CD4-positive, alpha-beta memory T cell (primary cell): ENCODE measurements at regions of chr1 and their contacts with region 1.

Region 1: GRCh38 chr1:151594143-151594625 is 17.7 kb upstream of the SNX27 start:
- DNase-seq: peak; percentile 82 to 84 (median 83)
- H3K4me3 ChIP-seq: peak overlapping the region in 1 of 2 donors; percentile 33
- H3K4me3 Mint-ChIP-seq: peak overlapping the region in 7 of 8 donors; percentile 33 to 82 (median 70)
- H3K27ac ChIP-seq: no peak overlapping the region
- H3K27ac Mint-ChIP-seq: peak overlapping the region in 6 of 7 donors; percentile 4 to 49 (median 26)
- H3K4me1 ChIP-seq: peaks cover 5% of the 10 kb centered on the region
- H3K4me1 Mint-ChIP-seq: peaks cover 3 to 12% (median 9%) of the 10 kb centered on the region in 4 donors
- H3K27me3 ChIP-seq: no peaks in the 10 kb centered on the region
- H3K27me3 Mint-ChIP-seq: peaks cover 4 to 8% of the 10 kb centered on the region in 2 donors

Region 2: GRCh38 chr1:151443846-151444782 is 150.1 kb before region 1 on chr1:
- CTCF ChIA-PET with region 1: interaction called, 12 read pairs
- POLR2A ChIA-PET with region 1: no interaction called
- intact Hi-C with region 1: loop called (anchors 1 kb)
- DNase-seq: peak; percentile 68 to 82 (median 68)
- H3K4me3 ChIP-seq: no peak overlapping the region
- H3K4me3 Mint-ChIP-seq: no peak overlapping the region
- H3K27ac ChIP-seq: no peak overlapping the region
- H3K27ac Mint-ChIP-seq: peak overlapping the region in 3 of 7 donors; percentile 41 to 79 (median 69)
- H3K4me1 ChIP-seq: peaks cover 50% of the 10 kb centered on the region
- H3K4me1 Mint-ChIP-seq: peaks cover 32 to 65% (median 50%) of the 10 kb centered on the region in 4 donors
- H3K27me3 ChIP-seq: no peaks in the 10 kb centered on the region
- H3K27me3 Mint-ChIP-seq: no peaks in the 10 kb centered on the region

Region 3: DNA sequence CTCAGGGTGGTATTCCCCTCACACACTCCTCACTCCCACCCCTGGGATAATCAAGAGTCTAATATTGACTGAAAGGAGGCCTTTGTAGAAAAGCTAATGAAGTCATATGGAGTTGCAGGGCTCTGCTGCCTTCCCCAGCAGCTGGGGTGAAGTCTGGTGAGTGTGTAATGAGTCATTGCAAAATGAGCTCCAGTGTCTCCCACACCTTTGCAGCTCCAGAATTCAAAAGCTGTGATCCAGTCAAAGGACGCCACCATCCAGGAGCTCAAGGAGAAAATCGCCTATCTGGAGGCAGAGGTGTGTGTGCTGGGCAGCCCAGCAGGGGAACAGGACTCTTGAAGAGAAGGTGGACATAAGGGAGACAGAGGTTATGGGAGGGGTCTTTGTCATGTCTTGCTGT is 14.7 kb before region 1 on chr1:
- CTCF ChIA-PET with region 1: interaction called, 11 read pairs
- POLR2A ChIA-PET with region 1: no interaction called
- intact Hi-C with region 1: no loop called
- DNase-seq: no peak
- H3K4me3 ChIP-seq: no peak overlapping the region
- H3K4me3 Mint-ChIP-seq: no peak overlapping the region
- H3K27ac ChIP-seq: no peak overlapping the region
- H3K27ac Mint-ChIP-seq: peak overlapping the region in 2 of 7 donors; percentile 39 to 42
- H3K4me1 ChIP-seq: no peaks in the 10 kb centered on the region
- H3K4me1 Mint-ChIP-seq: no peaks in the 10 kb centered on the region
- H3K27me3 ChIP-seq: no peaks in the 10 kb centered on the region
- H3K27me3 Mint-ChIP-seq: no peaks in the 10 kb centered on the region

Region 4: DNA sequence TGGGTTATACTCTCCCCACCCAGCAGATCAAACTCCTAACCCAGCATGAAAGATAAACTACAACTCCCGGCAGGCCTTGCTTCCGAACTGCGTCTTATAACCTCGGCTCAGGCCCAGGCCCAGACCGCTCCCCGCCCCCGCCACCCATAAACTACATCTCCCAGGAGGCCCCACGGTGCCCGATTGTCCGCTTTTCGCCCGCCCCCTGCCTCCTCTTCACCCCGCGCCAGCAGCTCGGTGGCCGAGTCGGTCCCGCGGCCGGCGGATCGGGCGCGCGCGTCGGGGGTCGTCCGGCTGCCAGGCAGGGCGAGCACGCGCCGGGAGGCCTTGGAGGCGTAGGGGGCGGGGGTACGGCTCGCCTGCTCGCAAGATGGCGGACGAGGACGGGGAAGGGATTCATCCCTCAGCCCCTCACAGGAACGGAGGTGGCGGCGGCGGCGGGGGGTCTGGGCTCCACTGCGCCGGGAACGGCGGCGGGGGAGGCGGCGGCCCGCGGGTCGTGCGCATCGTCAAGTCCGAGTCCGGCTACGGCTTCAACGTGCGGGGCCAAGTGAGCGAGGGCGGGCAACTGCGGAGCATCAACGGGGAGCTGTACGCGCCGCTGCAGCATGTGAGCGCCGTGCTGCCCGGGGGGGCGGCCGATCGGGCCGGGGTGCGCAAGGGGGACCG is 17.8 kb after region 1 on chr1 and contains the start of gene SNX27:
- CTCF ChIA-PET with region 1: interaction called, 33 read pairs
- POLR2A ChIA-PET with region 1: interaction called, 3 read pairs
- intact Hi-C with region 1: loop called (anchors 1 kb)
- DNase-seq: peak; percentile 87 to 96 (median 89)
- H3K4me3 ChIP-seq: peak within 1 kb of the TSS; percentile 73 to 77
- H3K4me3 Mint-ChIP-seq: peak within 1 kb of the TSS; percentile 98 to 100 (median 99)
- H3K27ac ChIP-seq: peak within 1 kb of the TSS; percentile 87
- H3K27ac Mint-ChIP-seq: peak within 1 kb of the TSS; percentile 89 to 99 (median 97)
- H3K4me1 ChIP-seq: peaks cover 32% of the 10 kb centered on the region
- H3K4me1 Mint-ChIP-seq: peaks cover 31 to 46% (median 39%) of the 10 kb centered on the region in 4 donors
- H3K27me3 ChIP-seq: no peaks in the 10 kb centered on the region
- H3K27me3 Mint-ChIP-seq: peaks cover 0 to 1% of the 10 kb centered on the region in 2 donors
- total RNA-seq, gene SNX27: 40.0 to 44.3 TPM

Region 5: GRCh38 chr1:151739590-151740375 is 145.6 kb after region 1 on chr1:
- CTCF ChIA-PET with region 1: interaction called, 21 read pairs
- POLR2A ChIA-PET with region 1: no interaction called
- intact Hi-C with region 1: loop called (anchors 1 kb)
- DNase-seq: no peak
- H3K4me3 ChIP-seq: no peak overlapping the region
- H3K4me3 Mint-ChIP-seq: no peak overlapping the region
- H3K27ac ChIP-seq: no peak overlapping the region
- H3K27ac Mint-ChIP-seq: no peak overlapping the region
- H3K4me1 ChIP-seq: no peaks in the 10 kb centered on the region
- H3K4me1 Mint-ChIP-seq: no peaks in the 10 kb centered on the region
- H3K27me3 ChIP-seq: no peaks in the 10 kb centered on the region
- H3K27me3 Mint-ChIP-seq: no peaks in the 10 kb centered on the region

Region 6: DNA sequence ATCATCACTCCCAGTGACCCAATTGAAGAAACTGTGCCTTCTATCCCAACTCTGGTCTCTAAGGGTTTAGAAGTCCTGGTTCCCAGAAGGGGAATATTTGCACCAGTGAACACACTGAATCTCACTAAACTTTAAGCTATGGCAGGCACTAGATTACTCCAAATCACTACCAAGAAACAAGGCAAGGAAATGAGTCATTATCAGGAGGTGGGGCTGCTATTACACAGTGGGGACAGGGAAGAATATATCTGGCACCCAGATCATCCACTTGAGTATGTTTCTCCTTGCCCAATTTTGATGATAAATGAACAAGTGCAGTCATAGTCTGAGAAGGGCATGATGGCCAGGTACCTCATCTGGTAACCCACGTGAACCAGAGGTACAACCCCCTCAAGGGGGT is 162.1 kb after region 1 on chr1:
- CTCF ChIA-PET with region 1: no interaction called
- POLR2A ChIA-PET with region 1: no interaction called
- intact Hi-C with region 1: no loop called
- DNase-seq: no peak
- H3K4me3 ChIP-seq: no peak overlapping the region
- H3K4me3 Mint-ChIP-seq: no peak overlapping the region
- H3K27ac ChIP-seq: no peak overlapping the region
- H3K27ac Mint-ChIP-seq: peak overlapping the region in 1 of 7 donors; percentile 29
- H3K4me1 ChIP-seq: no peaks in the 10 kb centered on the region
- H3K4me1 Mint-ChIP-seq: peaks cover 0 to 3% (median 0%) of the 10 kb centered on the region in 4 donors
- H3K27me3 ChIP-seq: no peaks in the 10 kb centered on the region
- H3K27me3 Mint-ChIP-seq: peaks cover 0 to 3% of the 10 kb centered on the region in 2 donors